Activated CD4-positive, alpha-beta memory T cell treated with anti-CD3 and anti-CD28 coated beads for 36 hours (primary cell): ENCODE measurements at regions of chr1 and their contacts with region 1.

Region 1: DNA sequence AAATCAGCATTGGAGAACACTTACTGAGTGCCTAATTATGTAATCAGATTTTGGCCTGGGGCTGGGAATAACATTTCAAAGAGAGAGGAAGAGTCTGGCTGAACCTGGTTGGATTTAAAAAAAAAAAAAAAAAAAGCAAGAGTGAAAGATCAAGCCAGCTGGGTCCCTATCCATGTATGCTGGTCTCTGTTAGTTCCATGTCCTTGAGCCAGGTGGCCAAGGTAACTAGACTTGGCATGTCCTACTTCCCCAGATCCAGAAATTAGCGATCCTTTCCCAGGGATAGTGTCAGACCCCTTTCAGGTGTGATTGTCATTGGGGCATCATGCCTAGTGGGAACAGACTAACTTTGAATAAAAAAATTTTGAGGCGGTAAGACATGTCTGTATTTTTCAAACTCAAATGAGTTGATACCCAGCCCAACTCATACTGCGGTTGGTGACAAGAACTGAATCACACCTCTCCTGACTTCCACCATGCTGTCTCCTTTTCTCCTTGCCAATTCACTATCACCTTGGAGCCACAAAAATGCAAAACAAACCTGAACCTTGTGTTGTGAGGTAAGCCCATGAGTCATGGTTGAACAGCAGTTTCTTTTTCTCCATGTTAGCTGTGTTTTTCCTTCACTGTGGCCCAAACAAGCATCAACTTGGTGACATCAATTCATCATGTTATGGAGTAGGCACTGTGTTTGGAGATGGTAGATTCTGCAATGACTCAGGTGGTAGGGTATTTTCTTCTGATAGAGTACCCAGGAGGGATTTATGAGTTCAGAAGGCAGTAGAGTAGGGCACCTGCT is 24.5 kb upstream of the PPP2R5A start:
- DNase-seq: peak; percentile 45
- H3K4me3 Mint-ChIP-seq: no peak overlapping the region
- H3K27ac Mint-ChIP-seq: peak overlapping the region; percentile 4
- H3K4me1 Mint-ChIP-seq: peaks cover 34% of the 10 kb centered on the region
- H3K27me3 Mint-ChIP-seq: no peaks in the 10 kb centered on the region

Region 2: GRCh38 chr1:212035123-212035834 is 225.5 kb before region 1 on chr1 and contains the starts of genes DTL and INTS7:
- CTCF ChIA-PET with region 1: no interaction called
- POLR2A ChIA-PET with region 1: no interaction called
- intact Hi-C with region 1: no loop called
- DNase-seq: peak; percentile 99
- H3K4me3 Mint-ChIP-seq: peak within 1 kb of the TSS; percentile 97
- H3K27ac Mint-ChIP-seq: peak within 1 kb of the TSS; percentile 99
- H3K4me1 Mint-ChIP-seq: peaks cover 61% of the 10 kb centered on the region
- H3K27me3 Mint-ChIP-seq: peaks cover 2% of the 10 kb centered on the region
- total RNA-seq, gene DTL: 82.2 to 88.2 TPM
- total RNA-seq, gene INTS7: 19.3 to 19.6 TPM

Region 3: DNA sequence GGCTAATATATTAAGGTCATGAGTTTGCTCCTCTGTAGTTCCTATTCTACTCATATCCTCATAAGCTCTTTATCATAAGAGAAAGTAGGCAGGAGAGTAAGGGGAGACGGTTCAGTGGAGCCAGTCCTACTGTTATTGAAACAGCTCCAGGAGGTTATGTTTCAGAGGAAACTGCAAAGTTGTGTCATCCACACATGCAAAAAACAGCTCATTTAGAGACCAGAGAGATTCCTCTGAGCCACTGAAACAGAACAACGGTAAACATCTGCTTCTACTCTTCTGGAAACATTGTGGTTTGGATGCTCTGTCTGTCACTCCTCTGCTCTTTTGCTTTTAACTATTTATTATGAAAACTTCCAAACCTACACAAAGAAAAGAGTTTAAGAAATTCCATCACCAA is 41.8 kb before region 1 on chr1:
- CTCF ChIA-PET with region 1: no interaction called
- POLR2A ChIA-PET with region 1: no interaction called
- intact Hi-C with region 1: loop called (anchors 2 kb)
- DNase-seq: peak; percentile 42
- H3K4me3 Mint-ChIP-seq: no peak overlapping the region
- H3K27ac Mint-ChIP-seq: no peak overlapping the region
- H3K4me1 Mint-ChIP-seq: peaks cover 18% of the 10 kb centered on the region
- H3K27me3 Mint-ChIP-seq: peaks cover 2% of the 10 kb centered on the region